Activated CD4-positive, alpha-beta T cell treated with anti-CD3 and anti-CD28 coated beads, Interleukin-2, amount 10 ng/mL, durations not matched to agents 24 days and 14 days (primary cell): ENCODE measurements at regions of chr4 and their contacts with region 1.

Region 1: DNA sequence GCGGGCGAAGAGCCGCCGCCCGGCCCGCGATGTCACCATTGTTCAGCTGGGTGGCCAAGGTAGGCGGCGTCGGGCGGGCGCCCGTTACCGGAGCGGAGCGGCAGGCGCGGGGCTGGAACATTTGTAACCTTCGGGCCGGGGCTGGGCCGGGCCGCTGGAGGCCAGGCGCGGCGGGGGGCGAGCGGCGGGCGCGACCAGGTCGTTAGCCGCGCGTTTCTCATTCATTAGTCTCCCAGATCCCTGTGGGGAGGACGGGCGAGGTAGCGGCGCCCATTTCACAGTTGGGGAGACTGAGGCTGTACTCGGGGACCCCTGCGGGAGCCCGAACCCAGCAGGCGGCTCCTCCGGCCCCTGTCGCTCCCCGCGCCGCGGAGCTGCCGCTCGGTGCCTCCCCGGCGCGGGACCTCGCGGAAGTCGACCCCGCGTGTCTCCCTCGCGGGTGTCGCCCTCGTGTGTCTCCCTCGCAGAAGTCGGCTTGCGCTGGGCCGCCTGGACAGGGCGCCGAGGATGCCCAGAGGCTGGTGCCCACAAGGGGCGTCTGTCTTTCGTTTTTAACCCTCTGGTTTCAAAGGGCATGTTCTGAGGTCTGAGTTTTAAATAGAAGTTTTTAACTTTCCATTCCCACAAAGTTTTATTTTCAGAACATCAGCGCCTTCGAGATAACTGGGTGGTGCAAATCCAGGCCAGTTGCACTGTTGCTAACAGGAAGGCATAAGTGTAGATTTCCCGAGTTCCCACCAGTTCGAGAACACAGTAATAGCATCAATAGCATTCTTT is 17.5 kb downstream of the PTTG2 start:
- DNase-seq: peak; percentile 93
- H3K4me3 Mint-ChIP-seq: peak overlapping the region; percentile 87
- H3K27ac Mint-ChIP-seq: peak overlapping the region; percentile 86
- H3K4me1 Mint-ChIP-seq: peaks cover 24% of the 10 kb centered on the region
- H3K27me3 Mint-ChIP-seq: peaks cover 2% of the 10 kb centered on the region

Region 2: DNA sequence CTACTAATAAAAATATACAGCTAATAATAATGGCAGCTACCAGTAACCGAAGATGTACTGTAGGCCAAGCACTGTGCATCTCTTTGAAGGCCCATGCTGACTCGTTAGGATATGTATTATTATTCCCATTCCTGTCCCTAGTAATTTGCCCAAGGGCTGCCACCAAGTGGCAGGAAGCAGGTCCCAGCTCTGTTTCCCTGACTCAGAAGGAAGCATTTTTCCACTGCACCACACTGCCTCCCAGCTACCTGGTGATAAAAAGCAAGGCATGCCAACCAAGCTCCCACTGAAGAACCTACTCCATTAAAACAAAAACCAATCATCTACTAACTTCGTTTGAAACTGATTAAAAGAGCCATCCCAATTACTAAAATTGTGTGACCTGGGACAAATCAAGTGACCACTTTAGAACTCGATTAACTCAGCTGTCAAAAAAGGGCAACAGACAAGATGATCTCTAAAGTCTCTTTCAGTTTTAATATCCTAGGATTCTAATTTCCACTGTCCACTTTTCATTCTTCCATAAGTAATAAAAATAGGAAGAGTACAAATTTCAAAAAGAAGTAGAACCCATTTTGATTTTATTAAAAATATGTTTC is 175.5 kb before region 1 on chr4:
- intact Hi-C with region 1: loop called (anchors 1 kb)
- DNase-seq: no peak
- H3K4me3 Mint-ChIP-seq: no peak overlapping the region
- H3K27ac Mint-ChIP-seq: no peak overlapping the region
- H3K4me1 Mint-ChIP-seq: no peaks in the 10 kb centered on the region
- H3K27me3 Mint-ChIP-seq: peaks cover 18% of the 10 kb centered on the region

Region 3: DNA sequence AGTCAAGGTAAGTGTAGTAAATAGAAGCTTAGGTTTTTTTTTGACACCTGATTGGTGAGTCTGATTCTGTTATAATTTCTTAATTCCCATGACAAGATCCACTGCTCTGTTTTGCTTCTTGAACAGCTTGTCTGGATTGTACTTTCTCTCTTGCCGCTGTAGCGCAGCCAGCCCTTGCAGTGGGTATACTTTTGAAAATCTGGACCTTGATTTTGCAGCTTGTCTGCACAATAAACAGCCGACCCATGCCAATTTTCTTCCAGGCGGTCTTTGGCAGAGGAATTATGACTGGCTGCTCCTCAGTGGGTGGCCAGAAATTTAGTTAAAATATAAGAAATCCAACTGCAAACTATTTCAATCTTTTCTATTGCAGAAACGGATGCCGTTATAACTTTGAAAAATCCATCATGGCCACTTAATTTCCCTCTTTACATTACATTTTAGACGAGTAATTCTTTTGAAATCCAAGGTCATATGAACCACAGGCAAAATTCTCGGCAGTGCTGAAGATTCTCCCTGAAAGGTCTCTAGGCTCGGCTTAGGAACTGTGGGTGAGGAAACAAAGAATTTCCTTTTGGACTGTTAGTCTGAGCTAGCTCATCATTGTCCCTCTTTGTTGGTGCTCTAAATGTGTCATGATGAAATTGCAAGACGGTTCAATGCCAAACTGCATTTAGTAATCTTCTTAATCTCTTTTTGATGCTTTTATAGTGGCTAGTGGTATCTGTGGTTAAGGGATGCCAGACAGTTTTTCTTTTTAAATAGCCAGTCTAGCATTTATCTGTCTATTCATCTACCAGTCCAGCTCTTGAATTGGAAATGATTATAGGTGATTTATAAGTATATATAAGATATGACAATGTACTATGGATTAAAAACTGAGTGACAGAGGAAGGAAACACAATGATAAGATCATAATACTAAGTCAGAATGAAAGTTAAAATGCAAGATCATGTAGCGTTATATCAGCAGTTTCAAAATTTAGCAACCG is 48.9 kb before region 1 on chr4:
- intact Hi-C with region 1: loop called (anchors 5 kb)
- DNase-seq: no peak
- H3K4me3 Mint-ChIP-seq: no peak overlapping the region
- H3K27ac Mint-ChIP-seq: no peak overlapping the region
- H3K4me1 Mint-ChIP-seq: peaks cover 22% of the 10 kb centered on the region
- H3K27me3 Mint-ChIP-seq: no peaks in the 10 kb centered on the region

Region 4: GRCh38 chr4:38034986-38035882 is 57.6 kb after region 1 on chr4:
- intact Hi-C with region 1: loop called (anchors 5 kb)
- DNase-seq: peak; percentile 82
- H3K4me3 Mint-ChIP-seq: no peak overlapping the region
- H3K27ac Mint-ChIP-seq: no peak overlapping the region
- H3K4me1 Mint-ChIP-seq: no peaks in the 10 kb centered on the region
- H3K27me3 Mint-ChIP-seq: no peaks in the 10 kb centered on the region